Activated T-helper 2 cell treated with anti-CD3 and anti-CD28 coated beads, Interferon-gamma antibody, Interleukin-2, Interleukin-4, amounts not matched to agents 10 μg/mL and 5 μg/mL and 100 μg/mL, durations not matched to agents 14 hours and 24 hours and 36 hours (primary cell): ENCODE measurements at regions of chr1 and their contacts with region 1.

Region 1: GRCh38 chr1:24502709-24503058 is at the start of gene RCAN3:
- DNase-seq: peak; percentile 90
- H3K4me3 Mint-ChIP-seq: peak within 1 kb of the TSS; percentile 96
- H3K27ac Mint-ChIP-seq: peak within 1 kb of the TSS; percentile 99
- H3K4me1 Mint-ChIP-seq: peaks cover 70% of the 10 kb centered on the region
- H3K27me3 Mint-ChIP-seq: no peaks in the 10 kb centered on the region
- total RNA-seq, gene RCAN3: 31.9 and 33.8 TPM in 2 replicates

Region 2: GRCh38 chr1:23530747-23531561 is 971.7 kb before region 1 on chr1 and contains the start of gene E2F2:
- intact Hi-C with region 1: loop called (anchors 5 kb)
- DNase-seq: peak; percentile 78
- H3K4me3 Mint-ChIP-seq: peak within 1 kb of the TSS; percentile 95
- H3K27ac Mint-ChIP-seq: peak within 1 kb of the TSS; percentile 96
- H3K4me1 Mint-ChIP-seq: peaks cover 67% of the 10 kb centered on the region
- H3K27me3 Mint-ChIP-seq: no peaks in the 10 kb centered on the region
- total RNA-seq, gene E2F2: 17.2 and 18.6 TPM in 2 replicates

Region 3: GRCh38 chr1:24266398-24266941 is 236.2 kb before region 1 on chr1:
- intact Hi-C with region 1: no loop called
- DNase-seq: no peak
- H3K4me3 Mint-ChIP-seq: no peak overlapping the region
- H3K27ac Mint-ChIP-seq: no peak overlapping the region
- H3K4me1 Mint-ChIP-seq: no peaks in the 10 kb centered on the region
- H3K27me3 Mint-ChIP-seq: peaks cover 21% of the 10 kb centered on the region

Region 4: GRCh38 chr1:24277420-24278169 is 225.1 kb before region 1 on chr1:
- intact Hi-C with region 1: no loop called
- DNase-seq: no peak
- H3K4me3 Mint-ChIP-seq: no peak overlapping the region
- H3K27ac Mint-ChIP-seq: no peak overlapping the region
- H3K4me1 Mint-ChIP-seq: peaks cover 14% of the 10 kb centered on the region
- H3K27me3 Mint-ChIP-seq: peaks cover 31% of the 10 kb centered on the region

Region 5: GRCh38 chr1:24491577-24492360 is 10.9 kb before region 1 on chr1:
- intact Hi-C with region 1: loop called (anchors 1 kb)
- DNase-seq: no peak
- H3K4me3 Mint-ChIP-seq: no peak overlapping the region
- H3K27ac Mint-ChIP-seq: no peak overlapping the region
- H3K4me1 Mint-ChIP-seq: peaks cover 20% of the 10 kb centered on the region
- H3K27me3 Mint-ChIP-seq: no peaks in the 10 kb centered on the region

Region 6: GRCh38 chr1:24536391-24536840 is 33.7 kb after region 1 on chr1:
- intact Hi-C with region 1: loop called (anchors 1 kb)
- DNase-seq: peak; percentile 43
- H3K4me3 Mint-ChIP-seq: peak overlapping the region; percentile 76
- H3K27ac Mint-ChIP-seq: peak overlapping the region; percentile 98
- H3K4me1 Mint-ChIP-seq: peaks cover 64% of the 10 kb centered on the region
- H3K27me3 Mint-ChIP-seq: no peaks in the 10 kb centered on the region

Region 7: DNA sequence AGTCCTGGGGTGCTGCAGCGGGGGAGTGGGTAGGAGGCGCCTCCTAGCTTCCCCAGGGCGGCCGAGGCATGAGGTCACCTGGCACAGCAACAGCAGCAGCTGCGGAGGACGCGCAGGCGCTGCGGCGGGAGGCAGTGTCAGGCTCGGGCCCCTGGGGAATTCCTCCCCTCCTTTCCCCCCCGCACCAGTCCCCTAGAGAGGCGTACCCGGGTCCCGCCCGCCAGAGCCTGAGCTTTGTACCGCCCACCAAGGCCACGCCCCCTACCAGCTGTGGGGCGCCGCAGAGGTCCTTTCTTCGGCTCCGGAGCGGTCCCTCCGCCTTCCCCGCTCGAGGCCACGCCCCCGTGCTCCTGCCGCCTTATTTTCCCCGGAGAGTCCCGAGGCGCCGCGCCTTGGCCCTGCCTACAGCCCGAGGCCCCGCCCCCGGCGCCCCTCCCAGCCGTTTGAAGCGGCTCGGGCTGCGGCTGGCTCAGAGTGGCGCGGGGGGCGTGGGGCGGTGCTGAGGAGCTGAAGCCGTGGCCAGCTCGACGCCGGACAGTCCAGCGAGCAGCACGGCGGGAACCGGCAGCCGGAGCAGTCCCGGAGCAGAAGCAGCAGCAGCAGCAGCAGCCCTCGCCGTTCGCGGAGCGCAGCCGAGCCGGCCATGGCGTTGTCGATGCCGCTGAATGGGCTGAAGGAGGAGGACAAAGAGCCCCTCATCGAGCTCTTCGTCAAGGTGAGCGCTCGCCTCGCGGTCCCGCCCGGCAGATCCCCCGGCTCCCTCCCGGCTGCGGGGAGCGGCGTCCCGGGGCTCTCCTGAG is 242.4 kb after region 1 on chr1 and contains the start of gene CLIC4:
- intact Hi-C with region 1: loop called (anchors 5 kb)
- DNase-seq: peak; percentile 100
- H3K4me3 Mint-ChIP-seq: peak within 1 kb of the TSS; percentile 91
- H3K27ac Mint-ChIP-seq: peak within 1 kb of the TSS; percentile 84
- H3K4me1 Mint-ChIP-seq: peaks cover 51% of the 10 kb centered on the region
- H3K27me3 Mint-ChIP-seq: no peaks in the 10 kb centered on the region
- total RNA-seq, gene CLIC4: 17.9 and 18.2 TPM in 2 replicates